ENCODE measurements at regions of chr6 and their contacts with region 1.

Region 1: DNA sequence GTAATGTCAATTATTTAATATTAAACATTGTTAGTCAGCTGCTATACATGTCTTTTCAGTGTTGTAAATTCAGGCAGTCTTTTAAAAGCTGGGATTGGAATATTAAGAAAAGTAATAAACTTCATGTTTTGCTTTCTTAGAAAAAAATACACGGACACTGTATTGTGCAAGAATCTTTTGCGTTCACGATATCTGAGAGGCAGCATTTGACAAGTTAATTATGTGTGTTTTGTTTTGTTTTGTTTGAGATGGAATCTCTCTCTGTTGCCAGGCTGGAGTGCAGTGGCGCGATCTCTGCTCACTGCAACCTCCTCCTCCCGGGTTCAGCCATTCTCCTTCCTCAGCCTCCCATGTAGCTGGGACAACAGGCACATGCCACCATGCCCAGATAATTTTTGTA is 1661.3 kb downstream of the HACE1 start:
- DNase-seq: no peak
- ATAC-seq: no peak
- H3K4me3 ChIP-seq: no peak overlapping the region
- H3K27ac ChIP-seq: no peak overlapping the region
- H3K4me1 ChIP-seq: no peaks in the 10 kb centered on the region
- H3K27me3 ChIP-seq: no peaks in the 10 kb centered on the region
- CTCF ChIP-seq: no peak
- EP300 ChIP-seq: no peak
- POLR2A ChIP-seq: no peak
- RAD21 ChIP-seq: no peak

Region 2: DNA sequence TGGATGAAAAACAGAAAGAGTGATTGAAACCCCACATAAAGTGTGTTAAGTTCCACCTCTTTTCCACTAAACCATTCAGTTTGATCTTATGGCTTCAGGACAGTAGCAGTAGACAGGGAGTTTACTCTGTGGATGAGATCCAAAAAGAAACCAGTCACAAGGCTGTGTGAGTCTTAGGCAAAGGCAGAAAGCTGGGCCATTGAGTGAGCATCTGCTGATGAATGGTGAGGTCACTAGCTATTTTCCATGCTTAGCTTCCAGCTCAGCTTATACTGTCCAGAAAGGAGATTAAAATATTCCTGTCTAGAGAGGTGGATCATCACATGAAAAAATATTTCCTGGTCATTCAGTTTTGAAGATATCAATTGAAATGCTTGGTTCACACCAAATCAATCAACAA is 17.5 kb after region 1 on chr6:
- CTCF ChIA-PET with region 1: interaction called, 9 read pairs
- POLR2A ChIA-PET with region 1: interaction called, 3 read pairs
- RAD21 ChIA-PET with region 1: interaction called, 8 read pairs
- SMC1A ChIA-PET with region 1: interaction called, 27 read pairs
- in situ Hi-C with region 1: no loop called
- intact Hi-C with region 1: no loop called
- DNase-seq: no peak
- ATAC-seq: peak; percentile 42
- H3K4me3 ChIP-seq: no peak overlapping the region
- H3K27ac ChIP-seq: no peak overlapping the region
- H3K4me1 ChIP-seq: no peaks in the 10 kb centered on the region
- H3K27me3 ChIP-seq: no peaks in the 10 kb centered on the region
- CTCF ChIP-seq: no peak
- EP300 ChIP-seq: no peak
- POLR2A ChIP-seq: no peak
- RAD21 ChIP-seq: no peak

Measured in GM12878 (cell line).